ENCODE measurements at regions of chr5 and their contacts with region 1.

Region 1: GRCh38 chr5:80360914-80361444 is 41.2 kb downstream of the SPZ1 start:
- DNase-seq: no peak
- ATAC-seq: no peak
- H3K4me3 ChIP-seq: no peak overlapping the region
- H3K27ac ChIP-seq: no peak overlapping the region
- H3K4me1 ChIP-seq: no peaks in the 10 kb centered on the region
- H3K27me3 ChIP-seq: no peaks in the 10 kb centered on the region

Region 2: GRCh38 chr5:80093796-80094195 is 267.2 kb before region 1 on chr5:
- intact Hi-C with region 1: no loop called
- DNase-seq: no peak
- ATAC-seq: no peak
- H3K4me3 ChIP-seq: no peak overlapping the region
- H3K27ac ChIP-seq: no peak overlapping the region
- H3K4me1 ChIP-seq: no peaks in the 10 kb centered on the region
- H3K27me3 ChIP-seq: no peaks in the 10 kb centered on the region

Region 3: GRCh38 chr5:80374188-80374587 is 13.2 kb after region 1 on chr5:
- intact Hi-C with region 1: loop called in 1 of 4 experiments (anchors 2 kb)
- DNase-seq: no peak
- ATAC-seq: no peak
- H3K4me3 ChIP-seq: no peak overlapping the region
- H3K27ac ChIP-seq: no peak overlapping the region
- H3K4me1 ChIP-seq: no peaks in the 10 kb centered on the region
- H3K27me3 ChIP-seq: no peaks in the 10 kb centered on the region

Region 4: GRCh38 chr5:80736730-80737129 is 375.8 kb after region 1 on chr5:
- intact Hi-C with region 1: no loop called
- DNase-seq: no peak
- ATAC-seq: no peak
- H3K4me3 ChIP-seq: no peak overlapping the region
- H3K27ac ChIP-seq: no peak overlapping the region
- H3K4me1 ChIP-seq: no peaks in the 10 kb centered on the region
- H3K27me3 ChIP-seq: no peaks in the 10 kb centered on the region

Measured in right cardiac atrium (tissue), 5 donors.